ENCODE measurements at regions of chr18 and their contacts with region 1.

Region 1: GRCh38 chr18:76803814-76804213 is 18.5 kb upstream of the ZNF236 start:
- DNase-seq: peak; percentile 59 to 69 (median 66)
- H3K4me3 ChIP-seq: no peak overlapping the region
- H3K4me3 Mint-ChIP-seq: peak overlapping the region in 6 of 8 donors; percentile 23 to 68 (median 62)
- H3K27ac ChIP-seq: no peak overlapping the region
- H3K27ac Mint-ChIP-seq: peak overlapping the region in 2 of 7 donors; percentile 58 to 75
- H3K4me1 ChIP-seq: peaks cover 16% of the 10 kb centered on the region
- H3K4me1 Mint-ChIP-seq: peaks cover 7 to 22% (median 10%) of the 10 kb centered on the region in 4 donors
- H3K27me3 ChIP-seq: peaks cover 6% of the 10 kb centered on the region
- H3K27me3 Mint-ChIP-seq: peaks cover 0 to 9% of the 10 kb centered on the region in 2 donors

Region 2: DNA sequence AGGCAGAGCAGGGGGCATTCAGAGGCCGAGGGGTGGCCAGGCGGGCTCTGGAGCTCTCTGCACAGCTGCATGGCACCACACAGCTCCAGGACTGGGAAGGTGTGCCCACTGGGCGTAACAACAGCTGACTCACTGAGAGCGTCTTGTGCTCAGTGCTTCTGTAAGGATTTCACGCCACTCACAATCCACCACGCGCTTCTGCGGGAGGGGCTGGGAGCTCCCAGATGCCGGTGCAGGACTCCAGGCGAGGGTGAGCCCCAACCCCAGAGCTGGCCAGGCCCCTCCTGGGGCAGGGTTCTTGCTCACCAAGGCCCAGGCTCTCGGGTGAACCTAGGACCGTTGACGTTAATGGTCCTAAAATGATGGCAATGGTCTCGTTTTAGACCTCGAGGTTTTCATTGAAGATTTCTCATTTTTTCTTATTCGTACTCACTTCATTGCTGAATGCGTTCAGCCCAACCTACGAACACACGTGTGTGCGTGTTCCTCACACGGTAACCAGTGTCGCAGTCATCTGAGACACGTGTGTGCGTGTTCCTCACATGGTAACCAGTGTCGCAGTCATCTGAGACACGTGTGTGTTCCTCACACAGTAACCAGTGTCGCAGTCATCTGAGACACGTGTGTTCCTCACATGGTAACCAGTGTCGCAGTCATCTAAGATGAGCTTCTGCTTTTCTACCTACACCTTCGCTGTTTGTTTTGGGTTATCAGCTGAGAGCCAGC is 19.9 kb before region 1 on chr18:
- CTCF ChIA-PET with region 1: interaction called, 94 read pairs
- POLR2A ChIA-PET with region 1: interaction called, 3 read pairs
- intact Hi-C with region 1: no loop called
- DNase-seq: no peak
- H3K4me3 ChIP-seq: no peak overlapping the region
- H3K4me3 Mint-ChIP-seq: no peak overlapping the region
- H3K27ac ChIP-seq: no peak overlapping the region
- H3K27ac Mint-ChIP-seq: no peak overlapping the region
- H3K4me1 ChIP-seq: no peaks in the 10 kb centered on the region
- H3K4me1 Mint-ChIP-seq: peaks cover 0 to 10% (median 3%) of the 10 kb centered on the region in 4 donors
- H3K27me3 ChIP-seq: no peaks in the 10 kb centered on the region
- H3K27me3 Mint-ChIP-seq: peaks cover 13 to 16% of the 10 kb centered on the region in 2 donors

Region 3: DNA sequence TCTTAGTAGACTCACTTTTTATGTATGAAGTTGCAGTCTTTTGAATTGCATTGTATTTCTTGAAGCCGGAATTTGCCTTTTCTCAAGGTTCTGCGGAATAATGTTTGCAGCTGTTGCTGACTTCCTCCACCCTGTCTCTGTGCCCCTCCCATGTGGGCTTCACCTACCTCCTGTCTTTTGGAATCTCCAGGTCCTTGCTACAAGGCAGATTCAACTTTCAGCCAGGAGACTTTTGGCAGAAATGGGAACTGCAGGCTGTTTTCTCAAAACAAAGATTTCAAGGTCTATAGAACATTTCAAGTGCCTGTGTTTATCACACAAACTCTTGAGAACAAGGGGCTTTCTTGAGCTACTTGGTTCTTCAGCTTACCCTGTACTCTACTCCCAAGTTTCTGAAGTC is 44.1 kb after region 1 on chr18:
- CTCF ChIA-PET with region 1: interaction called, 21 read pairs
- POLR2A ChIA-PET with region 1: no interaction called
- intact Hi-C with region 1: no loop called
- DNase-seq: no peak
- H3K4me3 ChIP-seq: no peak overlapping the region
- H3K4me3 Mint-ChIP-seq: no peak overlapping the region
- H3K27ac ChIP-seq: no peak overlapping the region
- H3K27ac Mint-ChIP-seq: no peak overlapping the region
- H3K4me1 ChIP-seq: peaks cover 9% of the 10 kb centered on the region
- H3K4me1 Mint-ChIP-seq: peaks cover 18 to 37% (median 26%) of the 10 kb centered on the region in 4 donors
- H3K27me3 ChIP-seq: no peaks in the 10 kb centered on the region
- H3K27me3 Mint-ChIP-seq: no peaks in the 10 kb centered on the region

Region 4: DNA sequence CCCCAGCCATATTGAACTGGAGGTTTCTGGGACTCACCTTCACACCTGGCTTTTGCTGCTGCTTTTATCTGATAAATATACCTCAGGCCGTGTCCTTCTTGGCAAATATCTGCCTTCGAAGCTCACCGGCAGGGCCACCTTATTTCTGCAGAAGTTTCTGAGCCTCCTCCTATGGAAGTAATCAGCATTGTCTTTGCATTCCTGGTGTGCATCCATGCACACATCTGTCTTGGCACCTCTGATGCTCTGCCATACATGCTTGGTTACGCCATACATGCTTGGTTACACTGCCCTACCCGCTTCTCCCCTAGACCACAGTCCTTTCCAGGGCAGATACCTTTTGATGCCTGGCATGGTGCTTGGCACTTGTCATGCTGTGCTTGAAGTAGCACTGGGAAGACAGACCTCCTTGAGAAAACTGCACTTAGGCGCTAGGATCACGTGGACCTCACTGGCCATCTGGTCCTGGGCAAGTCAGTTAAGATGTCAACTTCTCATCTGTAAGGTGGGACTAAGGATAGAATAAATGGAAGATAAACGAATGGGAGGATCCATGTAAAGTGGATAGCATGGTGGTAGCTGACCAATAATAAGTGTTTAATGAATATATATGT is 85.4 kb after region 1 on chr18:
- CTCF ChIA-PET with region 1: interaction called, 11 read pairs
- POLR2A ChIA-PET with region 1: no interaction called
- intact Hi-C with region 1: no loop called
- DNase-seq: no peak
- H3K4me3 ChIP-seq: no peak overlapping the region
- H3K4me3 Mint-ChIP-seq: no peak overlapping the region
- H3K27ac ChIP-seq: no peak overlapping the region
- H3K27ac Mint-ChIP-seq: no peak overlapping the region
- H3K4me1 ChIP-seq: no peaks in the 10 kb centered on the region
- H3K4me1 Mint-ChIP-seq: no peaks in the 10 kb centered on the region
- H3K27me3 ChIP-seq: no peaks in the 10 kb centered on the region
- H3K27me3 Mint-ChIP-seq: no peaks in the 10 kb centered on the region

Region 5: GRCh38 chr18:77054606-77055428 is 251.0 kb after region 1 on chr18:
- CTCF ChIA-PET with region 1: interaction called, 6 read pairs
- POLR2A ChIA-PET with region 1: no interaction called
- intact Hi-C with region 1: loop called (anchors 5 kb)
- DNase-seq: peak; percentile 80 to 88 (median 86)
- H3K4me3 ChIP-seq: peak overlapping the region in 1 of 2 donors; percentile 54
- H3K4me3 Mint-ChIP-seq: peak overlapping the region; percentile 72 to 92 (median 86)
- H3K27ac ChIP-seq: peak overlapping the region; percentile 84
- H3K27ac Mint-ChIP-seq: peak overlapping the region; percentile 93 to 100 (median 97)
- H3K4me1 ChIP-seq: peaks cover 83% of the 10 kb centered on the region
- H3K4me1 Mint-ChIP-seq: peaks cover 56 to 79% (median 68%) of the 10 kb centered on the region in 4 donors
- H3K27me3 ChIP-seq: no peaks in the 10 kb centered on the region
- H3K27me3 Mint-ChIP-seq: no peaks in the 10 kb centered on the region

Region 6: DNA sequence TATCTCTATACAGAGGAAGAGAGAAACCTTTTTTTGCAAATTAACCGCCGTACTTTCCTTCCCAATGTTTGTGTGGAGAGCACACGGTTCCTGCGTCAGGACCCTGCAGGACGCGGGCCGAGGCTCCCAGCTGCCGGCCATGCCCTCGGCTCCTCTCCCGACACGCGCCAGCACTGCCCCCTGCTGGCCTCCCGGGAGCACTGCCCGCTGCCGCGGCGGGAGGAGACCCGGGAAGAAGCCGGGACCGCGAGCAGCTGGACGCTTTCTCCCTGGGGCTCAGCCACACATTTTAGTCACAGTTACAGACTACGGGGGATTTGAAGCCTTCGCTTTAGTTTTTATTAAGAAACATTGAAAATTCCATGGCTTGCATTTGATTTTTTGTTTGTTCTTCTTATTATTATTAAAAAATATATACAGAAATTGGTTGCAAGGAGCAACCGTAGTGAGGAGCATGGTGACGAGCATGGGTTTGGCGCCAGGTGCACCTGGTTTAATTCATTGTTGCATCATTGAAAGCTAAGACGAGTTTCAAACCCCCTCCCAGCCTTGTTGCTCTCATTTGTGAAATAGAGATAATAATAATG is 847.1 kb after region 1 on chr18:
- CTCF ChIA-PET with region 1: interaction called, 16 read pairs
- POLR2A ChIA-PET with region 1: no interaction called
- intact Hi-C with region 1: no loop called
- DNase-seq: peak in 4 of 5 donors; percentile 35 to 54 (median 38)
- H3K4me3 ChIP-seq: no peak overlapping the region
- H3K4me3 Mint-ChIP-seq: no peak overlapping the region
- H3K27ac ChIP-seq: no peak overlapping the region
- H3K27ac Mint-ChIP-seq: no peak overlapping the region
- H3K4me1 ChIP-seq: no peaks in the 10 kb centered on the region
- H3K4me1 Mint-ChIP-seq: peaks cover 0 to 2% (median under 1%) of the 10 kb centered on the region in 4 donors
- H3K27me3 ChIP-seq: no peaks in the 10 kb centered on the region
- H3K27me3 Mint-ChIP-seq: peaks cover 13 to 16% of the 10 kb centered on the region in 2 donors

Measured in CD4-positive, alpha-beta memory T cell (primary cell).